ENCODE measurements at regions of chr2 and their contacts with region 1.

Region 1: GRCh38 chr2:202634556-202635427 is at the start of gene FAM117B:
- DNase-seq: peak; percentile 96
- H3K4me3 ChIP-seq: peak within 1 kb of the TSS; percentile 86 to 98 (median 97)
- H3K27ac ChIP-seq: peak within 1 kb of the TSS; percentile 60
- H3K4me1 ChIP-seq: peaks cover 10% of the 10 kb centered on the region
- H3K27me3 ChIP-seq: no peaks in the 10 kb centered on the region
- CTCF ChIP-seq: no peak
- total RNA-seq, gene FAM117B: 2.8 to 3.4 TPM

Region 2: DNA sequence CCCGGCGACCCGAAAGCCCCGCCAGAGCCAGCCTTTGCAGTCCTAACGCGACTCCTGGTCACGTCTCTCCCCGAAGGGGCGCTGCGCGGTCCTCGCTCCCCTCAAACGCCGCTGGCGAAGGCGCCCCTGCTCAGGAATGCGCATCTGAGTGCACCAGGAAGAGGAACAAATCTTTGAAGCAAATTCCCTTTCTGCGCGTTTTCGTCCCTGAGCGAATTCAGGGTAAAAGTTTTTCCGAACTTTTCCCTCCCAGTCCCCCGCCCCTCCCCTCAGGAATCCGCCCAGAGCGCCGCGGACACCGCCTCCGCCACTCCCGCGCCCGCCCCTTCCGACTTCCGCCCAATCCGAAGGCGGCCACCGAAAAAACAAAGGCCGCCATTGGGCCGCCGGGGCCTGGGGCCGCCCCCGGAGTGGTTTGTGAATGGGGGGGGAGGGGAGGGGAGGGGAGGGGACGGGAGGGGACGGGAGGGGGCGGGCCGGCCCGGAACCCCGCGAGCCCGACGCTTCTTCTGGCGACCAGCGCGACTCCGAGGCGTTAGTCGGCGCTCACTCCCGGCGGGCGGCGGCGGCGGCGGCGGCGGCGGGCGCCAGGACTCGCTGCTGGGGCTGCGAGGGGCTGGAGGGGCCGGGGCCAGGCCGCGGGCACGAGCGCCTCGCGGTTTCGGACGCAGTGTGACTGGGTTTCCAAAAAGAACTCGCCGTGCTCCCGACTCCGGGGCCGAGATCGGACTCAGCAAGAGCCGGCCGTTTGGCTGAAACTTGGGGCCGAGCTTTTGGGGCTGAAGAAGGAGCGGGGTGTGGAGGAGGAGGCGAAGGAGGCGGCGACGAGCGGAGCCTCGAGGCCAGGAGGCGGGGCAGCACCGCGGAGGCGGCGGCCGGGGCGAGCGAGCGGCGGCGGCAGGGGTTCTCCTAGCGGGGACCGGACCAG is 601.2 kb before region 1 on chr2 and contains the start of gene FZD7:
- CTCF ChIA-PET with region 1: interaction called, 12 read pairs
- dilution Hi-C with region 1: no loop called
- in situ Hi-C with region 1: no loop called
- intact Hi-C with region 1: no loop called
- DNase-seq: peak; percentile 90
- H3K4me3 ChIP-seq: peak within 1 kb of the TSS; percentile 63 to 79 (median 71)
- H3K27ac ChIP-seq: peak within 1 kb of the TSS; percentile 80
- H3K4me1 ChIP-seq: peaks cover 32% of the 10 kb centered on the region
- H3K27me3 ChIP-seq: no peaks in the 10 kb centered on the region
- CTCF ChIP-seq: peak in 1 of 2 donors; percentile 37
- total RNA-seq, gene FZD7: 21.6 to 66.5 TPM

Region 3: GRCh38 chr2:202588647-202589581 is 45.9 kb before region 1 on chr2:
- CTCF ChIA-PET with region 1: no interaction called
- dilution Hi-C with region 1: no loop called
- in situ Hi-C with region 1: no loop called
- intact Hi-C with region 1: loop called (anchors 5 kb)
- DNase-seq: peak; percentile 57
- H3K4me3 ChIP-seq: no peak overlapping the region
- H3K27ac ChIP-seq: no peak overlapping the region
- H3K4me1 ChIP-seq: peaks cover 3% of the 10 kb centered on the region
- H3K27me3 ChIP-seq: no peaks in the 10 kb centered on the region
- CTCF ChIP-seq: peak; percentile 89 to 94

Region 4: DNA sequence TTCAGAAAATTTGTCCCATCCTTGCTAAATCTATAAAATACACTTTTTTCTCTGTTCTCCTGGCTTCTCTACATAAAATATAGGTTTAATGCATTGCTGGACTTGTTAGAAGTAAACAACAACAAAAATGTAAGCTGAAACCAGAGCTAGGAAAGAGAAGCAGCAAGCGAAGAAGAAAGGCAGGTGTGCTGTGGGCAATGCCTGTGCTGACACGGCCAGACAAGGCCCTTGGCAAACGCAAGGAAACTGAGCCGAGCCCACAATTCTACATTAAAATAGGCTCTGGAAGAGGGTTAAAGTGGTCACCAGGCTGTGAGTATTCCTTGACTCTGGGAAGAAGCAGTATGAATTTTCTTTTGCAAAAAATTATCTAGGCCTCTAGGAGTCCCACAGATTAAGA is 166.8 kb after region 1 on chr2:
- CTCF ChIA-PET with region 1: no interaction called
- dilution Hi-C with region 1: no loop called
- in situ Hi-C with region 1: no loop called
- intact Hi-C with region 1: loop called (anchors 10 kb)
- DNase-seq: peak; percentile 12
- H3K4me3 ChIP-seq: no peak overlapping the region
- H3K27ac ChIP-seq: no peak overlapping the region
- H3K4me1 ChIP-seq: peaks cover 2% of the 10 kb centered on the region
- H3K27me3 ChIP-seq: no peaks in the 10 kb centered on the region
- CTCF ChIP-seq: no peak